Prostate gland (tissue), 2 donors: ENCODE measurements at regions of chr17 and their contacts with region 1.

Region 1: DNA sequence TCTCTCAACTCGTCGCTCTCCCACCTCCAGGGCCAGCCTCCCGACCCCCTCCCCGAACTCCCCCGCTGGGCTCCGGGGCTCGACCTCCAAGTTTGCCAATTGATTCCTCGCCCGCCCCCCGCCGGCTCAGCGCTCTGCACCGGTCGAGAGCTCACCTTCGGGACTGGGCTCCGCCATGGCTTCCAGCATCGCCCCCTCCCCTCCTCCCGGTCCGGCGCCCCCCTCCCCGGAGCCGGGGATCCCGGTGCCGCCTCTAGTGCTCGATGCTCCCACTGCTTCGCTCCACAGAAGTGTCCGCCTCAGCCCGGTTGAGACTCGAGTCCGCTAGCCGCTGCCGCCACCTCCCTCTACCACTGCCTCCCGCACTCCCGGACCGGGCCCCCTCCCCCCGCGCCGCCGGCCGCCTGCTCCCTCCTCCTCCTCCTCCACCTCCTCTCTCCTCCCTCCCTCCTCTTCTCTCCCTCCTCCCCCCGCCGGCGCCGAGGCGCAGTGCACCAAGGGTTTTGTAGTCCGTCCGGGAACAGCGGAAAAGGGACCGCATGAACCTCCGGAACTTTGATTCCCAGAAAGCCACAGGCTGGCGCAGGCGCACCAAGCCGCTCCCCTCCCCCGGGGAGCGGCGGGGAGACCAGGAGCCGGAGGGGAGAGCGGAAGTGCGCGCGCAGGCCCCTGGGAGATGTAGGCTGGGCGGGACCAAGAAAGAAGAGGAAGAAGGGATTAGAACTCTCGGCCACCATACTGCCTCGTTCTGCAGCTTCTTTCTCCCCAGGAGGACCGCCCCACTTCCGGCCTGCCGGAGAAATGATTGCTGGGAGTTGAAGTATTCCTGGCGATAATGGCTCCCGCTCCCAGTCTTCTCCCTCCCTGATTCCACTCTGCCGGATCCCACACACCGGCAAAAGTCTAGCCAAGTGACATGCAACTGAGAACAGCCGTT is at the start of gene PHF23:
- DNase-seq: peak; percentile 99
- H3K4me3 ChIP-seq: peak within 1 kb of the TSS; percentile 94 to 100
- H3K27ac ChIP-seq: peak within 1 kb of the TSS; percentile 98 to 99
- H3K4me1 ChIP-seq: peaks cover 18% of the 10 kb centered on the region
- H3K27me3 ChIP-seq: no peaks in the 10 kb centered on the region
- CTCF ChIP-seq: peak in 3 of 4 experiments; percentile 27 to 78 (median 33)
- POLR2A ChIP-seq: peak; percentile 89
- total RNA-seq, gene PHF23: 41.2 to 92.5 TPM

Region 2: GRCh38 chr17:7834962-7835813 is 595.8 kb after region 1 on chr17:
- intact Hi-C with region 1: loop called (anchors 10 kb)
- DNase-seq: peak; percentile 97
- H3K4me3 ChIP-seq: peak overlapping the region; percentile 75 to 83
- H3K27ac ChIP-seq: peak overlapping the region; percentile 95 to 98
- H3K4me1 ChIP-seq: peaks cover 22% of the 10 kb centered on the region
- H3K27me3 ChIP-seq: no peaks in the 10 kb centered on the region
- CTCF ChIP-seq: peak; percentile 67 to 95 (median 86)
- POLR2A ChIP-seq: peak; percentile 87